Naive thymus-derived CD4-positive, alpha-beta T cell (primary cell): ENCODE measurements at regions of chr4 and their contacts with region 1.

Region 1: GRCh38 chr4:125314676-125315575 is at the start of gene FAT4:
- DNase-seq: peak in 5 of 9 donors; percentile 17 to 56 (median 36)
- ATAC-seq: peak; percentile 74
- H3K4me3 ChIP-seq: peak within 1 kb of the TSS; percentile 50
- H3K4me3 Mint-ChIP-seq: peak within 1 kb of the TSS; percentile 80 to 91 (median 86)
- H3K27ac ChIP-seq: no peak within 1 kb of the TSS
- H3K27ac Mint-ChIP-seq: peak within 1 kb of the TSS in 2 of 9 donors; percentile 23 to 74
- H3K4me1 ChIP-seq: peaks cover 0 to 8% of the 10 kb centered on the region in 2 donors
- H3K4me1 Mint-ChIP-seq: peaks cover 18 to 49% (median 32%) of the 10 kb centered on the region in 7 donors
- H3K27me3 ChIP-seq: peaks cover 0 to 23% of the 10 kb centered on the region in 2 donors
- H3K27me3 Mint-ChIP-seq: peaks cover 60 to 82% (median 76%) of the 10 kb centered on the region in 5 donors
- total RNA-seq, gene FAT4: 0.05 to 0.42 TPM in 2 of 5 experiments, not detected in the others

Region 2: GRCh38 chr4:125276811-125277210 is 38.1 kb before region 1 on chr4:
- CTCF ChIA-PET with region 1: no interaction called
- POLR2A ChIA-PET with region 1: no interaction called
- intact Hi-C with region 1: no loop called
- DNase-seq: no peak
- ATAC-seq: no peak
- H3K4me3 ChIP-seq: no peak overlapping the region
- H3K4me3 Mint-ChIP-seq: no peak overlapping the region
- H3K27ac ChIP-seq: no peak overlapping the region
- H3K27ac Mint-ChIP-seq: no peak overlapping the region
- H3K4me1 ChIP-seq: no peaks in the 10 kb centered on the region
- H3K4me1 Mint-ChIP-seq: no peaks in the 10 kb centered on the region
- H3K27me3 ChIP-seq: no peaks in the 10 kb centered on the region
- H3K27me3 Mint-ChIP-seq: no peaks in the 10 kb centered on the region

Region 3: GRCh38 chr4:125741825-125742452 is 427.0 kb after region 1 on chr4:
- CTCF ChIA-PET with region 1: no interaction called
- POLR2A ChIA-PET with region 1: no interaction called
- intact Hi-C with region 1: loop called in 1 of 2 experiments (anchors 5 kb)
- DNase-seq: no peak
- ATAC-seq: no peak
- H3K4me3 ChIP-seq: no peak overlapping the region
- H3K4me3 Mint-ChIP-seq: no peak overlapping the region
- H3K27ac ChIP-seq: no peak overlapping the region
- H3K27ac Mint-ChIP-seq: no peak overlapping the region
- H3K4me1 ChIP-seq: no peaks in the 10 kb centered on the region
- H3K4me1 Mint-ChIP-seq: no peaks in the 10 kb centered on the region
- H3K27me3 ChIP-seq: no peaks in the 10 kb centered on the region
- H3K27me3 Mint-ChIP-seq: no peaks in the 10 kb centered on the region

Region 4: DNA sequence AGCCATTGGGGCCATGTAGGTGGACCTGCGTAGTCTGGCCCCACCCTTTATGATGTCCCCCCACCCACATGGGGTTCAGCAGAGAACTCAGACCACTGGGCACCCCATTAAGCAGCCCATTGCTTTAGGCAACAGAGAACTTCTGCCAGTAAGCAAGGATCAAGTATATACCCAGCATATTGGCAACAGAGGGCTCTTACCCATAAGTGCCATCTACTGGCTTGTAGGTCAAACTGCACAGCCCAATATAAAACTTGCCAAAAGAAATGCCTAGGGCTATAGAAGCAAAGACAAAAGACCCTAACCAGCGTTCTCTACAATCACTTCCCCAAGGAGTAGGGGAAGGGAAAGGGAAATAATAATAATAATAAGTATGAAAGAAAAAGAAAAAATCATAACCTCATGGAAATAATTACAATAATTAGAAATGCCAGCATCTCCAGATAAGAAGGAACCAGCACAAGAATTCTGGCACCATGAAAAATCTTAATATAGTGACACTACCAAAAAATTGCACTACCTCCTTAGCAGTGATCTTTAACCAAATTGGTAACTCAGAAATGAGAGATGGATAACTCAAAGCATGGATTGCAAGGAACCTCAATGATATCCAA is 1090.5 kb after region 1 on chr4:
- CTCF ChIA-PET with region 1: no interaction called
- POLR2A ChIA-PET with region 1: no interaction called
- intact Hi-C with region 1: loop called in 1 of 2 experiments (anchors 2 kb)
- DNase-seq: no peak
- ATAC-seq: peak; percentile 6
- H3K4me3 ChIP-seq: no peak overlapping the region
- H3K4me3 Mint-ChIP-seq: no peak overlapping the region
- H3K27ac ChIP-seq: no peak overlapping the region
- H3K27ac Mint-ChIP-seq: no peak overlapping the region
- H3K4me1 ChIP-seq: no peaks in the 10 kb centered on the region
- H3K4me1 Mint-ChIP-seq: no peaks in the 10 kb centered on the region
- H3K27me3 ChIP-seq: no peaks in the 10 kb centered on the region
- H3K27me3 Mint-ChIP-seq: no peaks in the 10 kb centered on the region

Region 5: DNA sequence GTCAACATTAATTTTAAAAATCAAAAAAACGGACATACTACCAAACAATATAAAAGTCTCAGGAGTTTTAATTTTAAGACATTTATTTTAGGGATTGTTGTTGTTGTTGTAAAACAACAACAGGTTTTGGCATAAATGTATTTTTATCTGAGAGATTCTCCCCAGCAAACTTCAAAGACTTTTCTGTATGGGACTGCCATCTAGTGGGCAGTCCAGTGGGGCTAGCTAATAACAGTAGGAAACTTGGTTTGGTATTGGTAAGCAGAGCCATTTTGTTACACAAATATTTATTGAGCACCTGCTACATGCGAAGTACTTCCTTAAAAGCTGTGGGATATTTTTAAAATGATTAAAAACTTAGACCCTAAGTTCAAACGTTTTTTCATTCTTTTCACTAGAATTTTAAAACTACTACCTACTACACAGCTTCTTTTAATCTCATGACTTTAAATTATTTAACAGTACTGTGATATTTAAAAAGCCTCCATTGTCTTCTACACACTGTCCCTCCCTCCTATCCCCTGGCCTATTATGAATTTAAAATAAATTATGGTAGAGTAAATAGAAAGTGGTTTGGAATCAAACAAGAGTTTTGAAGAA is 1289.4 kb after region 1 on chr4:
- CTCF ChIA-PET with region 1: no interaction called
- POLR2A ChIA-PET with region 1: no interaction called
- intact Hi-C with region 1: loop called in 1 of 2 experiments (anchors 2 kb)
- DNase-seq: no peak
- ATAC-seq: no peak
- H3K4me3 ChIP-seq: no peak overlapping the region
- H3K4me3 Mint-ChIP-seq: no peak overlapping the region
- H3K27ac ChIP-seq: no peak overlapping the region
- H3K27ac Mint-ChIP-seq: no peak overlapping the region
- H3K4me1 ChIP-seq: no peaks in the 10 kb centered on the region
- H3K4me1 Mint-ChIP-seq: no peaks in the 10 kb centered on the region
- H3K27me3 ChIP-seq: no peaks in the 10 kb centered on the region
- H3K27me3 Mint-ChIP-seq: no peaks in the 10 kb centered on the region